WTC11 (cell line): ENCODE measurements at regions of chr16 and their contacts with region 1.

Region 1: DNA sequence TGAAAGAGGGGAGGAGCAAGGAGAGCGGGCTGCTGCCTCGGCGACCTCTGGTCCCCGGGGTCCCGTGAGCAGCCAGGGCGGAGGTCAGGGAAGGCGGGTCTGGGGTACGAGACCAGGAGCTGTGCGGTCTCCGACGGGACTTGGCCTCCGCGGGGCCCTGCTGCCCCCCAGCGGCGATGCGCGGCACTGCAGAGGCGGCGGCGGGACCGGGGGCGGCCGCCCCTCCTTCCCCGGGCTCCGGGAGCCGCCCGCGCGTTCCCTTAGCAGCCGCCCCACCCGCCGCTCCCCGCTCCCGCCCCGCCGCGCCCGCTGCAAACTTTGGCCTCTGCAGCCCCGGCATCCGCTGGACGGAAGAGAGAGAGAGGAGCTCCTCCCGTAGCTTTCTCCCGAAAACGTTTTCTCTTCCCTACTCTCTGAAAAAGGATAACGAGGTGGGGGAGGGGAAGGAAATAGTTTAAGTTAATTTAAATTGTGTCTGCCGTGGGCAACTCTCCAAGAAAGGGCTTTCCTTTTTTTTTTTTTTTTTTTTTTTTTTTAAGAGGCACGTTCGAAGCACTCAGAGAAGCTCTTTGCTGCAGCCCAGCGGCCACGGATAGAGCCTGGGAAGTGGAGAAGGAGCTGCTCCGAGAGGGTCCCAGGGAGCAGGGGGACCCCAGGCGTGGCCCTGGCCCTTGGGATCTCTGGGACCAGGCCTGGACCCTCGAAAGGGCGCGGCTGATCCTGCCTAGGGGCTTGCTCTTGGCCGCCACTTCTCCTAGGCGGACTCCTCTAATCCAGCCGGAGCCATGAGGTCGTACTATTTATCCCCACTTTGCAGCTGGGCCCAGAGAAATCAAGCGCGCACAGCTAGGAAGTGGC is 43.2 kb downstream of the C16orf82 start:
- DNase-seq: peak; percentile 93
- ATAC-seq: peak; percentile 83
- H3K4me3 Mint-ChIP-seq: peak overlapping the region; percentile 75
- H3K27ac Mint-ChIP-seq: no peak overlapping the region
- H3K4me1 Mint-ChIP-seq: peaks cover 28% of the 10 kb centered on the region
- H3K27me3 Mint-ChIP-seq: peaks cover 7% of the 10 kb centered on the region; the same call in 1 of the 2 replicates
- CTCF ChIP-seq: peak; percentile 99

Region 2: GRCh38 chr16:26569793-26570192 is 540.1 kb before region 1 on chr16:
- CTCF ChIA-PET with region 1: interaction called, 12 read pairs
- POLR2A ChIA-PET with region 1: no interaction called
- DNase-seq: peak; percentile 36
- ATAC-seq: peak; percentile 96
- H3K4me3 Mint-ChIP-seq: no peak overlapping the region
- H3K27ac Mint-ChIP-seq: no peak overlapping the region
- H3K4me1 Mint-ChIP-seq: peaks cover 4% of the 10 kb centered on the region
- H3K27me3 Mint-ChIP-seq: no peaks in the 10 kb centered on the region
- CTCF ChIP-seq: no peak

Region 3: GRCh38 chr16:26826500-26826899 is 283.4 kb before region 1 on chr16:
- CTCF ChIA-PET with region 1: interaction called, 16 read pairs
- POLR2A ChIA-PET with region 1: interaction called, 9 read pairs
- DNase-seq: no peak
- ATAC-seq: no peak; the same call in 1 of the 2 replicates
- H3K4me3 Mint-ChIP-seq: no peak overlapping the region
- H3K27ac Mint-ChIP-seq: no peak overlapping the region
- H3K4me1 Mint-ChIP-seq: no peaks in the 10 kb centered on the region
- H3K27me3 Mint-ChIP-seq: no peaks in the 10 kb centered on the region; the same call in 1 of the 2 replicates
- CTCF ChIP-seq: no peak

Region 4: GRCh38 chr16:26963114-26963513 is 146.8 kb before region 1 on chr16:
- CTCF ChIA-PET with region 1: interaction called, 26 read pairs
- POLR2A ChIA-PET with region 1: no interaction called
- DNase-seq: peak; percentile 63
- ATAC-seq: peak; percentile 99
- H3K4me3 Mint-ChIP-seq: no peak overlapping the region
- H3K27ac Mint-ChIP-seq: no peak overlapping the region
- H3K4me1 Mint-ChIP-seq: peaks cover 2% of the 10 kb centered on the region
- H3K27me3 Mint-ChIP-seq: peaks cover 4% of the 10 kb centered on the region
- CTCF ChIP-seq: peak; percentile 50

Region 5: GRCh38 chr16:27046958-27047518 is 62.9 kb before region 1 on chr16:
- CTCF ChIA-PET with region 1: interaction called, 15 read pairs
- POLR2A ChIA-PET with region 1: no interaction called
- DNase-seq: no peak
- ATAC-seq: no peak
- H3K4me3 Mint-ChIP-seq: no peak overlapping the region
- H3K27ac Mint-ChIP-seq: no peak overlapping the region
- H3K4me1 Mint-ChIP-seq: no peaks in the 10 kb centered on the region
- H3K27me3 Mint-ChIP-seq: no peaks in the 10 kb centered on the region
- CTCF ChIP-seq: no peak

Region 6: DNA sequence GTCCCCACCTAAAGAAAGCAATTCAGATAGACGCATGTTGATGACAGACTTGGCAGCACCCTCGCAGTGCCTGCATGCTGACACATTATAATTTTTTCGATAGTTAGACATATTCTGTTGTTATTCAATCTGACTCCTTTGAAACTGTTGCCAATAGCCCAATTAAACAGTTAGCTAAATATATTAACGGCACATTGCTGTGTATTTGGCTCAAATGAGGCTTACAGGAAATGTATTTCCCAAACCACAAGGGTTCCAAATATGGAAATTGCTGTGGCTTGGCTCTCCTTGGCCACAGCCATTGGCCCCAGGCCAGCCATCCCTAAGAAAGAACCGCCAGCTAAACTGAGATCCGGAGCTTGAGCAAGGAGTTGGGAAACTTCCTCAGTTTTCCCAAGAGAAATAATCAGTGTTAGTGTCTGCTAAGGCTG is 12.1 kb before region 1 on chr16:
- CTCF ChIA-PET with region 1: interaction called, 15 read pairs
- POLR2A ChIA-PET with region 1: no interaction called
- DNase-seq: no peak
- ATAC-seq: no peak
- H3K4me3 Mint-ChIP-seq: no peak overlapping the region
- H3K27ac Mint-ChIP-seq: no peak overlapping the region
- H3K4me1 Mint-ChIP-seq: no peaks in the 10 kb centered on the region
- H3K27me3 Mint-ChIP-seq: peaks cover 7% of the 10 kb centered on the region; the same call in 1 of the 2 replicates
- CTCF ChIP-seq: no peak

Region 7: GRCh38 chr16:27203429-27204231 is 93.7 kb after region 1 on chr16 and contains the start of gene KDM8:
- CTCF ChIA-PET with region 1: interaction called, 13 read pairs
- POLR2A ChIA-PET with region 1: no interaction called
- DNase-seq: peak; percentile 97
- ATAC-seq: peak; percentile 90
- H3K4me3 Mint-ChIP-seq: peak within 1 kb of the TSS; percentile 96
- H3K27ac Mint-ChIP-seq: peak within 1 kb of the TSS; percentile 100
- H3K4me1 Mint-ChIP-seq: peaks cover 18% of the 10 kb centered on the region
- H3K27me3 Mint-ChIP-seq: no peaks in the 10 kb centered on the region; the same call in none of the 2 replicates
- CTCF ChIP-seq: no peak
- total RNA-seq, gene KDM8: 10.9 to 16.5 TPM (median 11.7 TPM) in 3 replicates